Right ventricle myocardium inferior (tissue), 1 donor: ENCODE measurements at regions of chr5 and their contacts with region 1.

Region 1: GRCh38 chr5:154038707-154039457 is at the starts of genes FAM114A2 and MFAP3:
- DNase-seq: peak; percentile 95
- ATAC-seq: peak; percentile 98
- total RNA-seq, gene FAM114A2: 34.9 TPM
- total RNA-seq, gene MFAP3: 25.8 TPM

Region 2: GRCh38 chr5:153891394-153891793 is 147.5 kb before region 1 on chr5:
- intact Hi-C with region 1: no loop called
- DNase-seq: no peak
- ATAC-seq: no peak

Region 3: GRCh38 chr5:154002093-154002492 is 36.8 kb before region 1 on chr5:
- intact Hi-C with region 1: loop called (anchors 5 kb)
- DNase-seq: peak; percentile 47
- ATAC-seq: peak; percentile 90

Region 4: DNA sequence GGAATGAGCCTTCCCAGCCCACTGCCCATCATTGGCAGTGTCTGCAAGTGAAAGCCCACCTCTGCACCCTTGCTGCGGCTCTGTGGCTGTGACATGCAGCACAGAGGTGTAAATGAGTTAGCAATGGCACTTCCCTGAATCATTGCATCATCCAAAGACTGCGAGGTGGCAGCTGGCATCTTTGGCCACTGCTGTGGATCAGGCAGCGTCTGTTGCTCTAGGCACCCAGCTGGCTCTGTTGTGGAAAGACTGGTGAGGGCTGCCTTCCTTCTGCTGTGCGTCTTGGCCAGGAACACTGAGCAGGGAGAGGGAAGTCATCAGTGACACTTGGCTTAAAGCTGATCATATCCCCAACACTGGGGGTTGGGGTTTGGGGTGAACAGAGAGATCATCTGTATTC is 64.4 kb after region 1 on chr5:
- intact Hi-C with region 1: no loop called
- DNase-seq: no peak
- ATAC-seq: peak; percentile 33

Region 5: DNA sequence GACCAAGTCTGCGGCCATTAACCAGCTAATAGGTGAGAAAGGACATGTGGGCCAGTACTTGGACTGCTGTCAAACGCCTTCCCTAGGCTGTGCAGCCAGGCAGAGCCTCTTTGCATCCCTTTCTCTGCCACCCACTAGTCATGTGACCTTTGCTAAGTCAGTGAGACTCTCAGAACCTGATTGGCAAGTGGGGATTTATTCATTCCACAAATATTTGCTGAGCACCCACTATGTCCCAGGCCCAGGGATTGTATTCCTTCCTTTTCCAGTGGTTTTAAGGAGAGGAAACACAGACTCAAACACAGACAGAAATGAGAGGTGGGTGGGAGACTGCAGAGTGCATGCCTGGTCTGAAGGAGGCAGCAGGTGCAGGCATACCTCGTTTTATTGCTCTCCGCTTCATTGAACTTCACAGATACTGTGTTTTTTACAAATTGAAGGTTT is 80.0 kb after region 1 on chr5:
- intact Hi-C with region 1: no loop called
- DNase-seq: no peak
- ATAC-seq: no peak

Region 6: DNA sequence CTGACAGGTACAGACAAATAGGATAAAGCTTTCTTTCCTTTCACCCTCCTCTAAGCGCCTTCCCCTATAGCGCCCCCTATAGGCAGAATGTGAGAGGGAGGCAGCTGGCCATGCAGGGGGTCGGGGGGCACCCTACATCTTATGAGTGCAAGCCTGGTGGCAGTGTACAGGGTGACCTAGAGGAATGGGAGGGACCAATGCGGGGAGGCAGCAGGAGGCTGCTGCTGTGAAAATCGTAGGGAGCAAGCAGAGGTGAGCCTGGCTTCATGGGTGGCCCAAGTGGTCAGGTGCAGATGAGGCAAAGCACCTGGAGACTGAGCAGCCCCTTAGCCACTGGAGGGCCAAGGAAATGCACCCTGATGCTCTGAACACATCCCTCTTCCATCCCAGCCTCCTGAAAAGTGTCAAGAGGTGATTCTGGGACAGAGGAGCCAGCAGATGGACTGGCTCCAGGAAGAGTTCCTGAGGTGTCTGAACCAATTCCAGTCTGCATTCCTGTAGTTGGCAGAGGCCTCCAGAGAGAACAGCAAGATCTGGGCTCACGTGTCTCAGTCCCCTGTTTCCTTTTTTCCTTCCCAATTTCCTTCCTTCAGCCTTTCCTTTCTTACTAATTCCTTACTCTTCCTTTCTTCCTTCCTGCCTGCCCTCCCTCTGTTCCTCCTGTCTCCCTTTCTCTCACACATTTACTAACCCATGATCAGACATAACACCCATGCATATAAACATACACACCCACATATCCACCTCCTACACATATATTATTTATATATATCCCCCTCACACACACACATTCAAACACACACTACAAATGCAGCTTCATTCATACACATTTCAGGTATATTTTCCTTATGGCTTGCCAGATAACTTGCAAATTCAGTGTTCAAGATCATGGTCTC is 118.8 kb after region 1 on chr5:
- intact Hi-C with region 1: no loop called
- DNase-seq: no peak
- ATAC-seq: peak; percentile 57